ENCODE measurements at regions of chr1 and their contacts with region 1.

Region 1: DNA sequence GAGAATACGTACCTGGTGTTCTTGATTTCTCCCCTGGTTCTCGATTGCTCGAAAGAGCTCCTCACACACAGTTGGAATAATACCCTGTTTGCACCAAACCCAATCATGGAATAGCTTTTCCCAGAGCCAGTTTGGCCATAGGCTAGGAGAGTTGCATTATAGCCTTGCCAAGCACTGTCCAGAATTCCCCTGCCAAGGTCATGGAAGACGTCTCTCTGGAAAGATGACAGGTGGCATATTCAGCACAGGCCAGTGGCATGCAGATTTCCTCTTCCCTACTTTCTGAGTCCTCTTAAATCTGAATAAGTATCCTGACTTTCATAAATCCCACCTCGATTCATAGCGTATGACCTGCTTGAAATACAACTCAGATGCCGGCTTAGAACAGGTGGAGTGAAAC is 96.5 kb downstream of the SCCPDH start:
- DNase-seq: no peak
- H3K4me3 ChIP-seq: no peak overlapping the region
- H3K27ac ChIP-seq: no peak overlapping the region
- H3K4me1 ChIP-seq: no peaks in the 10 kb centered on the region
- H3K27me3 ChIP-seq: no peaks in the 10 kb centered on the region
- CTCF ChIP-seq: no peak
- EP300 ChIP-seq: no peak
- POLR2A ChIP-seq: no peak

Region 2: DNA sequence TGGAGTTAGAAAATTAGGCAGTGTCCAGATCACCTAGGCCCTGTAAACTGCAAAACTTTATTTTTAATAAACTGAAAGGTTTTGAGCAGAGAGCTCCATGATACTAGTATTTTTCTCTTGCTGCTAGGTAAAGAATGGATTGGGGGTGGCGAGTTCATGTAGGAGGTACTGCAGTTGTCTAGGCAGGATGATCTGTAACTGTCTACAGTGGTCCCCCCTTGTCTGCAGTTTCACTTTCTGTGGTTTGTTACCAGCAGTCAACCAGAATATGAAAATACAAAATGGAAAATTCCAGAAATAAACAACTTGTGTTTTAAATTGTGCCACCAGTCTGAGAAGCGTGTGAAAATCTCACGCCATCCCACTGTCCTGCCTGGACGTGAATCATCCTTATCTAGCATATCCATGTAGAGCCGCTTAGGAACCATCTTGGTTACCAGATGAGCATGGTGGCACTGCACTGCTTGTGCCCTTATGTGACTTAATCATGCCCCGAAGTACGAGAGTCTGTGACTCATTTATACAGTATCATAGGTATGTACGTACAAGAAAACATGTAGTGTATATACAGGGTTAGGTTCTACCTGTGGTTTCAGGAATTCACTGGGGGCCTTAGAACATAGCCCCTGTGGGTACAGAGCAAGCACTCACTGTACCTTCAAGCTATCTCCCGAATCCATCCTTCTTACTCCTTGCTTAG is 16.9 kb after region 1 on chr1:
- in situ Hi-C with region 1: no loop called
- intact Hi-C with region 1: loop called (anchors 1 kb)
- DNase-seq: no peak
- H3K4me3 ChIP-seq: no peak overlapping the region
- H3K27ac ChIP-seq: no peak overlapping the region
- H3K4me1 ChIP-seq: no peaks in the 10 kb centered on the region
- H3K27me3 ChIP-seq: no peaks in the 10 kb centered on the region
- CTCF ChIP-seq: no peak
- EP300 ChIP-seq: no peak
- POLR2A ChIP-seq: no peak

Region 3: DNA sequence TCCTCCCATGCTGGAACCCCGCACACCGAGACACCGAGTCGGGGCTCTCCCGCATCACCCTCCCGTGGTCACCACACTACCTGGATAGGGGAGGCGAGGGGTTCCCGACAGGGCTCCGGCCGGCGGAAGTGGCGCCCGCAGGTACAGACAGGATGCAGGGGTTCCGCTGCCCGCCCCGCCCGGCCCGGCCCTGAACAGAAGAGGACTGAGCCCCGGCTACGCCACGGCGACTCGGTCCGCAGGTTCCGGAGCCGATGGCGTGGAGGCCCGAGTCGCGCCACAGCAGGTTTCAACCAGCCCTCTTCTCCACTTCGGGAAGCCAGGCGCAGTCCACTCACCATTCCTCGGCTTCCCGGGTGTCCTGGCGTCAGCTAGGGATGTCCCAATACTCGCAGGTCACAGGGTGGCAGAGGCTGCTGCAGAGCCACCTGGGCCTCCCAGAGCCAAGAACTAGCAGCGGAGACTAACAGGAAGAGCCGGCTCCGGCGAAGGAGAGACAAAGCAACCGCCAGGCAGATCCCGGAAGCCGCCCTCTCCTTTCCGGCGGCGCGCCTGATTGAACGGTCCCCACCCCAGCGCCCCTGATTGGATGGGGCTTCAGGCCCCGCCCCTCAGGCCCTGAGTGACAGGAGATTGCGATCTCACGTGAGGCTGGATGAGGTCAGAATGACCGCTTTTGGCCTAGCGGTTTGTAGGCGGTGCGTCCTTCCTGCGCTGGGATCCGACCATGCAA is 283.4 kb after region 1 on chr1 and contains the start of gene ZNF669:
- in situ Hi-C with region 1: no loop called
- intact Hi-C with region 1: no loop called
- DNase-seq: peak; percentile 98
- H3K4me3 ChIP-seq: peak within 1 kb of the TSS; percentile 73 to 94 (median 78)
- H3K27ac ChIP-seq: peak within 1 kb of the TSS; percentile 91 to 95 (median 92)
- H3K4me1 ChIP-seq: peaks cover 5 to 17% (median 8%) of the 10 kb centered on the region in 4 donors
- H3K27me3 ChIP-seq: no peaks in the 10 kb centered on the region
- CTCF ChIP-seq: no peak
- EP300 ChIP-seq: no peak
- POLR2A ChIP-seq: peak; percentile 92
- total RNA-seq, gene ZNF669: 2.4 to 26.2 (median 4.9) TPM

Measured in transverse colon (tissue), 4 donors.